Activated naive CD4-positive, alpha-beta T cell treated with anti-CD3 and anti-CD28 coated beads, Interleukin-2, amount 10 ng/mL, durations not matched to agents 7 days and 5 days (primary cell): ENCODE measurements at regions of chr1 and their contacts with region 1.

Region 1: GRCh38 chr1:232950197-232951176 is at the start of gene NTPCR:
- DNase-seq: peak; percentile 95
- H3K4me3 Mint-ChIP-seq: peak within 1 kb of the TSS; percentile 96
- H3K27ac Mint-ChIP-seq: peak within 1 kb of the TSS; percentile 90
- H3K4me1 Mint-ChIP-seq: peaks cover 41% of the 10 kb centered on the region
- H3K27me3 Mint-ChIP-seq: no peaks in the 10 kb centered on the region

Region 2: DNA sequence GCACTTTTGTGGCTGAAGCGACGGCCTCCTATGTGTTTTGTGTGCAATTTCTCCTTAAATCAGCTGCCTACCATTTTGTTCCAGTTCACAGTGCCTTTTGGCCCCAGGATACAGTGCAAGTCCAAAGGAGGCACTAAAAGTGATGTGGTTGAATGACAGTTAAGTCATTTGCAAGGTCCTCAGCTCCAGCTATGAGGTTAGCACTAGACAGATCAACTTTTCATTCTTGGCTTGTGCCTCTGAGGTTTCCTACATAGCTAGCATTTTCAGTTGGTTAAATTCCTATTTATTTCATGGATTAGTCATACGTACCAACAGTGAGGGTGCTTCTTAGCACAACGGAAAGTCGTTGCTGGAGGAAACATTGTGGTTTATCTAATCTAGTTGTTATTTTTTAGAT is 59.4 kb before region 1 on chr1:
- CTCF ChIA-PET with region 1: no interaction called
- DNase-seq: no peak
- H3K4me3 Mint-ChIP-seq: no peak overlapping the region
- H3K27ac Mint-ChIP-seq: no peak overlapping the region
- H3K4me1 Mint-ChIP-seq: no peaks in the 10 kb centered on the region
- H3K27me3 Mint-ChIP-seq: peaks cover 13% of the 10 kb centered on the region

Region 3: GRCh38 chr1:232923739-232924386 is 26.6 kb before region 1 on chr1:
- CTCF ChIA-PET with region 1: interaction called, 16 read pairs
- DNase-seq: peak; percentile 75
- H3K4me3 Mint-ChIP-seq: peak overlapping the region; percentile 60
- H3K27ac Mint-ChIP-seq: peak overlapping the region; percentile 99
- H3K4me1 Mint-ChIP-seq: peaks cover 49% of the 10 kb centered on the region
- H3K27me3 Mint-ChIP-seq: no peaks in the 10 kb centered on the region

Region 4: GRCh38 chr1:232965124-232965911 is 14.8 kb after region 1 on chr1:
- CTCF ChIA-PET with region 1: interaction called, 12 read pairs
- DNase-seq: no peak
- H3K4me3 Mint-ChIP-seq: no peak overlapping the region
- H3K27ac Mint-ChIP-seq: no peak overlapping the region
- H3K4me1 Mint-ChIP-seq: peaks cover 27% of the 10 kb centered on the region
- H3K27me3 Mint-ChIP-seq: no peaks in the 10 kb centered on the region